Right ventricle myocardium inferior (tissue), 1 donor: ENCODE measurements at regions of chr3 and their contacts with region 1.

Region 1: DNA sequence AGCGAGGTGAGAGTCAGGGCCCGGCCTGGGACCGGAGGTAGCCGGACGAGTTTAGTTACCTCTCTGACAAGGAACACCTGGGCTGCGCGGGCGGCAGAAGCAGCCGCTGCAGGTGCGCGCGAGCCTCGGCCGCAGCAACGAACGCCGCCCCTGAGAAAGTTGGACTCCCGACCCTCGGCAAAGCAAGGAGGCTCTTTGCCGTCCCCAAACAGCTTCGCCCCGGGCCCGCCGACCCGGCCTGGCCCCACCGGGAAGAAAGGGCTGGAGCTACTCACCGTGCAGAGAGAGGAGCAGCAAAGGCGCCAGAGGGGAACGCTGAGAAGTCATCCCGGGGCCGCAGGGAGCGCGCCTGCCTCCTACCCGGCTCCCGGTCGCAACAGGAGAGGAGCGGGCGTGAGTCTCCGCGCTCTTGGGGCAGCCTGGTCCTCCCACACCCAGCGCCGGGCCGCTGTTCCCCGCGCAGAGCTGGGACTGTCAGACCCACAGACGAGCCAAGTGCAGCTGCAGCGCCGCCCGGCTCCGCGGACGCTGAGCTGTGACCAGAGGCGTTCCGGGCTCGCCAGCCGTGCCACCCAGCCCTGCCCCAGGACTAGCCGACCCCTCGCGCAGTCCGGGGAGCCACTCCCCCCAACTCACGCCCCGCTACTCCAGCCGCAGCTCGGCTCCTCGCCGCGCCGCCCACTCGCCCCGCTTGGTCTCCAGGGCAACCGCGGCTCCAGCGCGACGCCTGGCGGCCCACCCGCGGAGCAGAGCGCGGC is at the start of gene IGSF11:
- DNase-seq: peak; percentile 71
- ATAC-seq: peak; percentile 95
- total RNA-seq, gene IGSF11: 3.1 TPM

Region 2: GRCh38 chr3:118833075-118833474 is 201.4 kb before region 1 on chr3:
- intact Hi-C with region 1: no loop called
- DNase-seq: no peak
- ATAC-seq: no peak

Region 3: GRCh38 chr3:118943597-118943996 is 90.8 kb before region 1 on chr3:
- intact Hi-C with region 1: loop called (anchors 10 kb)
- DNase-seq: no peak
- ATAC-seq: no peak

Region 4: DNA sequence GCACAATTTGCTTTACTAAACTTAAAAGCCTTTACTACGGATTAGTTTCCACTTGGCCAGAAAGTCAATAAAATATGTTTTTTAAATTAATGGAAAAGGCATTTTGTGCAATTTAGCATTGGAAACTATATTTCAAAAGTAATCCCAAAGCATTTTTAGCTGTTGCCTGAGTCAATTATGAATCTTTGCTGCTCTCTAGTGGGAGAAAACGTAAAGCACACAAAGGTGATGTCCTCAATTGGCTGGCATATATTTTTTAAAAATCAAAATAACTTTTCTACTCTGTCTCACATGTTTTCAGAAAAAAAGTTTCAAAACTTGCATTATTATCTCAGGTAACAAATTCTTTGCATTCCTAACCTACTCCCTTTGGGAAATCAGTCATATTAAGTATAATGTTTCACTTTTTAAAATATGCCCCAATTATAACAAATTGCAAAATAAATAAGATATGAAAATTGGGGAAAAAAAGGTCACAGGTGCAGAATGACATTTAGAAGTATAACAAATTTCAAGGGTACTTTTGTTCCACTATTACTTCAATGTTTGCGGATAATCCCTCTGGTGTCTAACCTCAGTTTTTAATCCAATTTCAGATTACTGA is 64.3 kb after region 1 on chr3:
- intact Hi-C with region 1: loop called (anchors 1 kb)
- DNase-seq: no peak
- ATAC-seq: no peak